ENCODE measurements at regions of chr3 and their contacts with region 1.

Region 1: GRCh38 chr3:165273411-165273810 is 77.2 kb upstream of the SLITRK3 start:
- DNase-seq: no peak
- ATAC-seq: no peak
- H3K4me3 ChIP-seq: no peak overlapping the region
- H3K27ac ChIP-seq: no peak overlapping the region
- H3K4me1 ChIP-seq: no peaks in the 10 kb centered on the region
- H3K27me3 ChIP-seq: no peaks in the 10 kb centered on the region
- CTCF ChIP-seq: no peak
- EP300 ChIP-seq: no peak
- POLR2A ChIP-seq: no peak
- RAD21 ChIP-seq: no peak

Region 2: DNA sequence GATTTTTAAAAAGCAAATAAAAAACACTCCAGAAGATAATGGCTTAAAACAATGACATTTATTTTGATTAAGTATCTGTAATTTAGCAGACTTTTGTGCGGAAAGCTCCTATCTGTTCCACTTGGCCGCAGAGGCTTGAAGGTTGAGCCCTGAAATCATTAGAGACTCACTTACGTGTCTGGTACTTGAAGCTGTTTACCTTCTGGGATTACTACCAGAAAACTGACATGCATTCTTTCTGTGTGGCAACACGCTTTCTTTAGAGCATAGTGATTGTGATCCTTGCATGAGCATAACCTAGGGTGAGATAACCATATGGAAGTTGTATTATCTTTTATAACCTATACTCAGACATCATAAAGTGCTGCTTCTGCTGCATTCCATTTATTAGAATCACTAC is 493.6 kb before region 1 on chr3:
- CTCF ChIA-PET with region 1: no interaction called
- POLR2A ChIA-PET with region 1: no interaction called
- RAD21 ChIA-PET with region 1: no interaction called
- SMC1A ChIA-PET with region 1: no interaction called
- in situ Hi-C with region 1: no loop called
- intact Hi-C with region 1: no loop called
- DNase-seq: no peak
- ATAC-seq: no peak
- H3K4me3 ChIP-seq: no peak overlapping the region
- H3K27ac ChIP-seq: no peak overlapping the region
- H3K4me1 ChIP-seq: no peaks in the 10 kb centered on the region
- H3K27me3 ChIP-seq: no peaks in the 10 kb centered on the region
- CTCF ChIP-seq: no peak
- EP300 ChIP-seq: no peak
- POLR2A ChIP-seq: no peak
- RAD21 ChIP-seq: no peak

Region 3: DNA sequence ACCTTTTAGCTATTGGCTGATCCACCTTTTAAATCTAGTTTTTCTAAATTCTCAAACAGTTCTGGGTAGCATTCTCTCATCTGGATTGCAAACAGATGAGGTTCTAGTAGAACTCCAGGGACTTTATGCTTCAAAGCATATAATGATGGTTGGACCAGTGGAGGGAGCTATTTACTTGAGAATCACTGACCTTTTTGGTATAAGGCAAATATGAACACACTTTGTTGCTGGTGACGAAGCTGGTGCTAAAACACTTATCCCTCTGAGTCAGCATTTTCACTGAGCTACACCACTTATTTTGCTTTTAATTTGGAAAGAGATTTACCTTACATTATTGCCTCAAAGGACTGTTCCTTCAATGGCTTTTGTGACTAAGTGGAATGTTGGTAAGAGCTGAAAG is 18.6 kb before region 1 on chr3:
- CTCF ChIA-PET with region 1: interaction called, 5 read pairs
- POLR2A ChIA-PET with region 1: no interaction called
- RAD21 ChIA-PET with region 1: interaction called, 5 read pairs
- SMC1A ChIA-PET with region 1: interaction called, 19 read pairs
- in situ Hi-C with region 1: no loop called
- intact Hi-C with region 1: no loop called
- DNase-seq: no peak
- ATAC-seq: peak; percentile 84
- H3K4me3 ChIP-seq: no peak overlapping the region
- H3K27ac ChIP-seq: no peak overlapping the region
- H3K4me1 ChIP-seq: no peaks in the 10 kb centered on the region
- H3K27me3 ChIP-seq: no peaks in the 10 kb centered on the region
- CTCF ChIP-seq: peak in 1 of 3 experiments; percentile 15; a peak in 2 of 6 replicates
- EP300 ChIP-seq: no peak
- POLR2A ChIP-seq: no peak
- RAD21 ChIP-seq: peak; percentile 44